ENCODE measurements at regions of chr4 and their contacts with region 1.

Region 1: DNA sequence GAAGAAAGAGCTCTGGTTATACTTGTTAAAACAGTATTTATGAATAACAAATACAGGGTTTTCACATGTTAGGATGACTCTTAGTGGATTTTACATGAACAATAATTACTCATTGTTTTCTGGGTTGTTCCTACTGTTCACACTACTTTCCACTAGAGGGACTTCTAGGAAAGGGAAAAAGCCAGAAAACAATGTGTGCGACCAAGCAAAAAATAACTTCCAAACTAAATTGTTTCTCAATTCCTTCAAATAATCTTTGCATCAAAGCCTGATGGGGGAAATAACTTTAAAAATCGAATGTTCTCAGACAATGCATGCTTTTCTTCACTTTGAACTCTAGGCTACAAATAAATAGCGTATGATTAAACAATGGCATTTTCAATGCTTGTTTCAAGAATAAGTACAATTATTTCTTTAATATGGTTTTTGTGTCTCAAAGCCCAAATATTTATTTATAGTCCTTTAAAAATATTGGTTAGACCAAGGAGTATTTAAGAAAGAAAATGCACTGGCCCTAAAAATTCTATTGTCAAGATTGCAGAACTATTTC is 72.1 kb upstream of the ETNPPL start:
- DNase-seq: no peak
- ATAC-seq: peak in 1 of 2 donors; percentile 44

Region 2: GRCh38 chr4:109298279-109299010 is 463.5 kb after region 1 on chr4:
- intact Hi-C with region 1: loop called in 1 of 2 experiments (anchors 5 kb)
- DNase-seq: no peak
- ATAC-seq: no peak

Region 3: GRCh38 chr4:109406338-109406931 is 571.5 kb after region 1 on chr4:
- intact Hi-C with region 1: loop called in 1 of 2 experiments (anchors 2 kb)
- DNase-seq: no peak
- ATAC-seq: peak; percentile 71 to 72